OCI-LY7 (cell line): ENCODE measurements at regions of chrX and their contacts with region 1.

Region 1: DNA sequence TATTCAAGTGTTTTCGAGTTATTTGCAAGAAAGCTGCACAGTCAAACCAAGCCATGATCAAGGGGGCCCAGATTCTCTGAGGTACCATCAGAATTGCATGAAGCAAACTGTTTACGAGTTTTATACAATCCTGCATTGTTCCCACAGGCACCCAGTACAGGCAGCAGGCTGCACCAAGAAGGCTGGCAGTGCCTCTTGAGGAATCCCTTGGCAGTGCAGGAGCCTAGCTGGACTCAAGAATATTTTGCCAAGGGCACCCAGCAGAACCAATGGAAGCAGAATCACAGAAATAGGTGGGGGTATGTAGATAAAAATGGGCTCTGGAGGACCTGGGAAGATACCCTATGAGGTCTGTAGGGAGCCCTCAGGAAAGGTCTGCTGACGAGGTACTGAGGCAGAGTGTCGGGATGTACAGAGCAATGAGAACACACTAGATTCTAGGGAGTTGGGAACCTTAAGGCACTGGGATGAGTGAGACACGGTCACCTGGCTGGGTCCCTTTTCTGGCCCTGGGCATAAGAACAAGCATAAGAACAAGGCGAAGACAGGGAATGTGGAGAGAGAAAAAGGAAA is 2.5 kb upstream of the PLP1 start:
- DNase-seq: peak; percentile 7
- H3K4me3 ChIP-seq: no peak overlapping the region
- H3K27ac ChIP-seq: no peak overlapping the region
- H3K4me1 ChIP-seq: no peaks in the 10 kb centered on the region
- CTCF ChIP-seq: peak; percentile 54

Region 2: DNA sequence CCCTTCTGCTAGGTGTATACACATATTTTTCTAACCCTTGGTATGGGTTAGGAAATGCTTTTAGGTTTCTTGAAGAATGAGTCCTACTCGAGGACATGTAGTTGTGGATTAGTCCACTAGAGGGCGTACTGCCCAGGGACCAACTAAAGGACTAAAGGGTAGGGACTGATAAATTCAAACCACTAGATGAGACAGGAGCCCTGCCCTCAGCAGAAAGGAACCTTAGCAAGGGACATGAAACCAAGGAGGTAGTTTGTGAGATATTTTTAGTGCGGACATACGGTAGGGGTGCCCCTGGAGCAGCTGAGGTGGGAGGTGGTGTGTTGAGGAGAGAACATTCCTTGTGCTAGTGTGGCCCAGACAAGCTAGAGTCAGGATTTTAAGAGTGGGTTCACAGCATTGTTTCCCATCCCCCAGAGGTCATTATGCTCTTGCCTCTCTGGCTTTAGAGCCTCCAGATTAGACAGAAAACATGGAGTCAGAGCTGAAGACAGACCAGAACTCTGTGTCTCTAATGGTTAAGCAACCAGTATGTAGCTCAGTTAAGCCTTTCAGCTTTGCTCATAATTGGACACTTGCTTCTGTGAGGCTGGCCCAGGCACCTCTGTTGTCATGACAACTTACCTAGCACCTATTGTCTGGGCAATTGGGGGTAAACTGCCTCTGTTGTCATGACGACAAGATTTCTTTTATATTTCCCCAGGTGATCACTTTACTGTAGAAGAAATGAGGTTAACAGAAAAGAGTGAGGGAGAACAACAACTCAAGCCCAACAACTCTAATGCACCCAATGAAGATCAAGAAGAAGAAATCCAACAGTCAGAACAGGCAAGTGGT is 62.4 kb before region 1 on chrX:
- CTCF ChIA-PET with region 1: no interaction called
- POLR2A ChIA-PET with region 1: no interaction called
- intact Hi-C with region 1: loop called (anchors 2 kb)
- DNase-seq: peak; percentile 57
- H3K4me3 ChIP-seq: no peak overlapping the region
- H3K27ac ChIP-seq: no peak overlapping the region
- H3K4me1 ChIP-seq: no peaks in the 10 kb centered on the region
- CTCF ChIP-seq: peak; percentile 76

Region 3: GRCh38 chrX:103742339-103742738 is 31.8 kb before region 1 on chrX:
- CTCF ChIA-PET with region 1: no interaction called
- POLR2A ChIA-PET with region 1: no interaction called
- intact Hi-C with region 1: no loop called
- DNase-seq: no peak
- H3K4me3 ChIP-seq: no peak overlapping the region
- H3K27ac ChIP-seq: no peak overlapping the region
- H3K4me1 ChIP-seq: no peaks in the 10 kb centered on the region
- CTCF ChIP-seq: no peak